ENCODE measurements at regions of chr11 and their contacts with region 1.

Region 1: DNA sequence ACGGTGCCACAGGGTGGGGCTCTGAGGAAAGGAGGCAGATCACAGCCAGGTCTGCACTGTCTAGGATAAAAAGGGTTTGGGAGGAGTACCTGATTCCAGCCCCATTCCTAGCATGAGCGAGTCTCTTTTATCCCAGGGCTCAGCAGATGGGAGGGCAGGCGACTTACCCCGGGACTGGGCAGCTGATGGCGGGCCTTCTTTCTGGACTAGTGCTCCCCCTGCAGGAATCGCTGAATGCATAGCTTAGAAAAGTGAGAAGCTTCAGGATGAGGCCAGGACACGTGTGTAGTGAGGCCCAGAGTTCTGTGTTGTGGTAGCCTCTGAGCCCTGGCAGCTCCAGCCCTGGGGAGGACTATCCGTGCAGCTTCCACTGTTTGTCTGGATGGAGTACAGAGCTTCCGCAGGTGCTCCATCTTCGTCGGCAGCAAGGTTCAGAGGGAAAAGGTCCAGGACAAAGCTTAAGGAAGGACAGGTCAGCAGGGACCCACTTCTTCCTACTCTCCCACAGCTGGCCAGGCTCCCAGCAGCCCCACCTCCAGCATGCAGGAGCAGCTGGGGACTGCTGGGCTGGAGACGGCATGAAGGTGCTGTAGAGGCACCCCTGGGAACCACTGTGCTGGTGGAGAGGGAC is 30.4 kb downstream of the COMMD9 start:
- H3K4me3 ChIP-seq: no peak overlapping the region
- H3K27ac ChIP-seq: no peak overlapping the region
- H3K4me1 ChIP-seq: no peaks in the 10 kb centered on the region
- CTCF ChIP-seq: peak; percentile 18; the same call in 1 of the 2 replicates

Region 2: GRCh38 chr11:36081274-36081945 is 177.4 kb before region 1 on chr11:
- CTCF ChIA-PET with region 1: no interaction called
- POLR2A ChIA-PET with region 1: no interaction called
- H3K4me3 ChIP-seq: no peak overlapping the region
- H3K27ac ChIP-seq: no peak overlapping the region
- H3K4me1 ChIP-seq: no peaks in the 10 kb centered on the region
- CTCF ChIP-seq: no peak

Region 3: DNA sequence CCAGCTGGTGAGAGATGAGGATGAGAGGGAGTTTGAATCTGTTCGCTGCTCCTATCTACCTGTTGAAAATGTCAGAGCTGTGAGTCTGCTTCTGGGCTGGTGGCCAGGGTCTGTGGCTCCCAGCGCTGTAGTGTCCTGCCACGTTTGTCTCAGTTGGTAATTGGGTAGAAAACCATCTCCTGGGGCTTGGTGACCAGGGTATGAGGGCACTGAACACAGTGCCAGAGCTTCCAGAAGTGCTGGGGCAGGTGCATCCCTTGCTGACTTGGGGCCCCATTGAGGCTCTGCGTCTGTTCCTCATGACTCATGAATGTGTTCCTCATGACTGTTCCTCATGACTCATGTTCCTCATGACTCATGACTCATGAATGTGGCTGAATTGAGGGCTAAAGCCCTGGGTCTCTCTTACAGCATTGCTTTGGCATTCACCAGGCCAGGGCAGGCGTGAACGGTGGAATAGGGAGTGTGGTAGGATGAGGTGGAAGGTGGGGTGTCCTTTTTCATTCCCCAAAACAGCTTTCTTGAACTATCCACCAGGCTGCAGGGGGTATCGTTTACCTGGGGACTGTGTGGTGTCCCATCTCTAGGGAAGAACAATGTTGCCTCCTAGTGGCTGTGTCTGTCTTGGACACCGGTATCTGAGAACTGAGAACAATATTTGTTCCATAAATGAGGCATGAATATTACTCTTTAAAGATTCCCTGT is 109.2 kb before region 1 on chr11:
- CTCF ChIA-PET with region 1: interaction called, 11 read pairs
- POLR2A ChIA-PET with region 1: no interaction called
- H3K4me3 ChIP-seq: no peak overlapping the region
- H3K27ac ChIP-seq: no peak overlapping the region
- H3K4me1 ChIP-seq: no peaks in the 10 kb centered on the region; the same call in 1 of the 2 replicates
- CTCF ChIP-seq: no peak

Region 4: GRCh38 chr11:36367806-36368680 is 109.2 kb after region 1 on chr11:
- CTCF ChIA-PET with region 1: no interaction called
- POLR2A ChIA-PET with region 1: no interaction called
- H3K4me3 ChIP-seq: no peak overlapping the region
- H3K27ac ChIP-seq: no peak overlapping the region
- H3K4me1 ChIP-seq: no peaks in the 10 kb centered on the region
- CTCF ChIP-seq: no peak

Region 5: GRCh38 chr11:36513965-36514364 is 255.1 kb after region 1 on chr11:
- CTCF ChIA-PET with region 1: no interaction called
- POLR2A ChIA-PET with region 1: no interaction called
- H3K4me3 ChIP-seq: no peak overlapping the region
- H3K27ac ChIP-seq: no peak overlapping the region
- H3K4me1 ChIP-seq: no peaks in the 10 kb centered on the region
- CTCF ChIP-seq: no peak

Measured in HEK293 (cell line).